Mammary epithelial cell (primary cell): ENCODE measurements at regions of chr1 and their contacts with region 1.

Region 1: DNA sequence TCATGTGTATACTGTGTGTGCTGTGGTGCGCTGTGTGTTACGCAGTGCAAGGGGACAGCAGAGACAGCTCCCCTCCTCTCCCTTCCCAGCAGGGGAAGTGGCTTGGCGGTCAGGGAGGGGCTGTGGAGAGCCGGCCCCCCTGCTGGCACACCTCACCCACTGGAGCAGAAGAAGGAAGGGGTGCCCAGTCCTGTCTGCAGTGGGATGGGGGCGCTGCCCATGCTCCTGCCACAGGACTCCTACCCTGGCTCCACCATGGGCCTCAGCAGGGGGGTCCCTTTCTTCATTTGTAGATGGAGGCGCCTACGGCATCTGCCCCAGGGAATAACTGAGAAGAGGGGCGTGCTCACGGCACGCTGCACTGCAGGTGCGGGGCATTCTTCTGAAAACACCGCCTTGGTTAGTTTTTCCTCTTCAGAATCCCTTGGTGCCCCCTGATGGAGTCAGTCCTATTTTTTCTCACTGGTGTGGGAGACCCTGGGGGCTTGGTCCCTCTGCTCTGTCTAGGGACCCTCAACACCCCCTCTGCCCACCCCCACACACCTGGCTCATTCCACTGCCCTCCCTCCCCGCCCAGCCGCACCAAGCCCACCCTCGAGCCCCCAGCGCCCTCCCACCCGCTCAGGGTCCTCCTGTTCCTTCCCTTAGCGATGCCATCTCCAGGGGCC is 13.8 kb upstream of the LDLRAP1 start:
- DNase-seq: no peak
- H3K4me3 ChIP-seq: no peak overlapping the region
- H3K27ac ChIP-seq: no peak overlapping the region
- H3K4me1 ChIP-seq: peaks cover 3% of the 10 kb centered on the region
- H3K27me3 ChIP-seq: no peaks in the 10 kb centered on the region
- CTCF ChIP-seq: no peak

Region 2: DNA sequence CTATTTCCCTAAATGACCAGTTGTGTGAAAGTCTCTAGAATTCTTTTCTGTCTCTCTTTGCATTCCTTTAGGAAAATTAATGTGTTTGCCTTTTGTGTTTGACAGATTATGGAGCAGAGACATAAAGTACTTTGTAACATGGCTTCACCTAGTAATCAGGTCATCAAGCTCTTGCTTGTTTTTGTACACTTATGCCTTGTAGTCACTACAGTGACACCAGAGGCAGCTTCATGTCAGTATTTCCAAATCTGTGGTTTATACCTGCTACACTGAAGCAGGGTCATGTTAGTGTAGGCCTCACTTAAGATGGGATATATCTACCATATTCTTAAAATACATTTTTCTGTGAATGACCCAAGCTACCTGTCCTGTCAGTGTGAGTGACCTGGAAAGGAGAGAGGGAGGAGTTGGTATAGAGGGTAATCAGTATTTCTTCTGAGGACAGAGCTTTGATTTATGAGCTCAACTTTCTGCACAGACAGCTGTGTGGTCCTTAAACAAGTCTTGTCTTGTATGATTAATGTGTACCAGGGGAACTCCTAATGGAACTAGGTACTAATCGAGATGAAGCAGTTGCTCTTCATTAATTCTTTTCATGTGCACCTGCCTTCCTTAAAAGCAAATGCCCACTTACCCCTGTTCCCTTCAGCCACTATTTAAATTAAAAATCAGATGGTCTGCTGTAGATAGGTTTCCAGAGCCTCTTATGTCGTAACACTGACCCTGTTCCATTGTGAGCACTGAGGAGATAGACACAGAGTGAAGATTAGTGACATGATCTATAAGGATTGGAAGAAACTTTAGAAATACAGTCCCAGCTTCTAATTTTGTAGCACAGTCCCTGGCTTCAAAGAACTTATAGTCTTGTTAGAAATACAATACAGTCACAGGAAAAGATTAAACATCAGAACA is 53.2 kb before region 1 on chr1:
- CTCF ChIA-PET with region 1: no interaction called
- dilution Hi-C with region 1: loop called (anchors 5 kb)
- in situ Hi-C with region 1: no loop called
- intact Hi-C with region 1: no loop called
- DNase-seq: peak; percentile 67
- H3K4me3 ChIP-seq: no peak overlapping the region
- H3K27ac ChIP-seq: peak overlapping the region; percentile 24
- H3K4me1 ChIP-seq: peaks cover 31% of the 10 kb centered on the region
- H3K27me3 ChIP-seq: no peaks in the 10 kb centered on the region
- CTCF ChIP-seq: no peak

Region 3: DNA sequence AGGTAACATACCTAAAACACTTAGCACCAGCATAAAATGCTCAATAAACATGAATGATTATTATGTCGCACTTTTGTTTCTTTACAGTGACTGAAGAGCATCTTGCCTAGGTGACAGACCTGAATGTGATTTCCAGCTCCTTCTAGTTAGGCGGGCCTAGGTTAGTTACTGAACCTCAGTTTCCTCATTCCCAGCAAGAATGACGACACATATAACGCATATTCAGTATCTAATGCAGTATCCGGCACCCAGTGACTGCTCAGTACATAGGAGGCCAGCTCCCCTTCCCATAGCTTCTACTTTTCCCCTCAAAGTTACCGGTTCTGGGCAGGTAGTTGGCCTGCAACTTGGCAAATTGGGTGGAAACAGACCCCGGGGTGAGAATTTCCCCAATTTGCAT is 328.8 kb after region 1 on chr1:
- CTCF ChIA-PET with region 1: no interaction called
- dilution Hi-C with region 1: no loop called
- in situ Hi-C with region 1: no loop called
- intact Hi-C with region 1: no loop called
- DNase-seq: peak; percentile 16
- H3K4me3 ChIP-seq: peak overlapping the region; percentile 37 to 93 (median 88)
- H3K27ac ChIP-seq: peak overlapping the region; percentile 71
- H3K4me1 ChIP-seq: peaks cover 9% of the 10 kb centered on the region
- H3K27me3 ChIP-seq: no peaks in the 10 kb centered on the region
- CTCF ChIP-seq: no peak